Activated naive CD4-positive, alpha-beta T cell treated with anti-CD3 and anti-CD28 coated beads for 36 hours (primary cell): ENCODE measurements at regions of chr1 and their contacts with region 1.

Region 1: DNA sequence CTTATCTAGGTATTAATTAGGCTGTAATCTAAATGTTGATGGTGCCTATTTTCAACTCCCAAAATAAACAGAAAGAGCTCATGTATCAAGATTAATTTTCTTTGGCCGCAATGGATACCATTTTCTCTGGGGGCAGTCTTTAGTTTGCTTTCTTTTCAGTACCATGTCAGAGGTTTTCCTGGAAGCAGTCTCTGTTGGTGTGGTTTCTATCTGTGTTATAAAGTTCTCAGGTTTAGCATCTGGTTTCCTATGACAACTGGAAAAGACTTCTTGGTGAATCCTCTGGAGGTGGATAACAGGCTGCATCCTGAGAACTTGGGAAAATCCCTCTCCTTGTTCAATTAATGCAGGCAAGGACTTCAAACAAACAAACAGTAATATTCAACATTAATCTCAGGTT is 38.7 kb upstream of the BATF3 start:
- DNase-seq: no peak
- H3K4me3 Mint-ChIP-seq: no peak overlapping the region
- H3K27ac Mint-ChIP-seq: peak overlapping the region; percentile 47
- H3K4me1 Mint-ChIP-seq: peaks cover 30% of the 10 kb centered on the region
- H3K27me3 Mint-ChIP-seq: no peaks in the 10 kb centered on the region

Region 2: GRCh38 chr1:211991695-211992094 is 746.6 kb before region 1 on chr1:
- CTCF ChIA-PET with region 1: no interaction called
- intact Hi-C with region 1: no loop called
- DNase-seq: no peak
- H3K4me3 Mint-ChIP-seq: no peak overlapping the region
- H3K27ac Mint-ChIP-seq: no peak overlapping the region
- H3K4me1 Mint-ChIP-seq: no peaks in the 10 kb centered on the region
- H3K27me3 Mint-ChIP-seq: no peaks in the 10 kb centered on the region

Region 3: GRCh38 chr1:212721388-212722247 is 16.7 kb before region 1 on chr1:
- CTCF ChIA-PET with region 1: interaction called, 3 read pairs
- intact Hi-C with region 1: loop called (anchors 1 kb)
- DNase-seq: peak; percentile 71
- H3K4me3 Mint-ChIP-seq: no peak overlapping the region
- H3K27ac Mint-ChIP-seq: no peak overlapping the region
- H3K4me1 Mint-ChIP-seq: peaks cover 20% of the 10 kb centered on the region
- H3K27me3 Mint-ChIP-seq: no peaks in the 10 kb centered on the region